ENCODE measurements at regions of chr15 and their contacts with region 1.

Region 1: DNA sequence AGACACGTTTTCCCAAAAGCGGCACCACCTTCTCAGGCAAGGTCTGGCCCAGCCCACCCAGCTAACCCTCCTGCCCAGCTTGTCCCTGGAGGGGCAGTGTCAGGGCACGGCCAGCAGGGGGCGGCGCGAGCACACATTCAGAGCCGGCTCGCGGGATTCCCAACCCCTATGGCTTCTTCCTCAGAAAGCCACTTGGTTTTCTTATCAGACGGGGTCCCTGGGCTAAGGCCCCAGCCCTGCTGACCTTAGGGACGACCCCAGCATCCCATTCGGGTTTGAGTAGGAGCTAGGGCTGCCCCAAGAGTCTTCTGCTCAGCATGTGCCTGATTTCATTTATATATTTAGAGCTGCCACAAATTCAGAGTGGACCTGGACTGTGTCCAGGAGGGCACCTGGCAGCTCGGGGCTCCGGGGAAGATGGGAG is 14.5 kb downstream of the RLBP1 start:
- DNase-seq: no peak
- H3K4me3 ChIP-seq: no peak overlapping the region
- H3K27ac ChIP-seq: no peak overlapping the region
- H3K4me1 ChIP-seq: peaks cover 4% of the 10 kb centered on the region
- H3K27me3 ChIP-seq: no peaks in the 10 kb centered on the region
- CTCF ChIP-seq: peak; percentile 80 to 98 (median 89)
- POLR2A ChIP-seq: no peak

Region 2: DNA sequence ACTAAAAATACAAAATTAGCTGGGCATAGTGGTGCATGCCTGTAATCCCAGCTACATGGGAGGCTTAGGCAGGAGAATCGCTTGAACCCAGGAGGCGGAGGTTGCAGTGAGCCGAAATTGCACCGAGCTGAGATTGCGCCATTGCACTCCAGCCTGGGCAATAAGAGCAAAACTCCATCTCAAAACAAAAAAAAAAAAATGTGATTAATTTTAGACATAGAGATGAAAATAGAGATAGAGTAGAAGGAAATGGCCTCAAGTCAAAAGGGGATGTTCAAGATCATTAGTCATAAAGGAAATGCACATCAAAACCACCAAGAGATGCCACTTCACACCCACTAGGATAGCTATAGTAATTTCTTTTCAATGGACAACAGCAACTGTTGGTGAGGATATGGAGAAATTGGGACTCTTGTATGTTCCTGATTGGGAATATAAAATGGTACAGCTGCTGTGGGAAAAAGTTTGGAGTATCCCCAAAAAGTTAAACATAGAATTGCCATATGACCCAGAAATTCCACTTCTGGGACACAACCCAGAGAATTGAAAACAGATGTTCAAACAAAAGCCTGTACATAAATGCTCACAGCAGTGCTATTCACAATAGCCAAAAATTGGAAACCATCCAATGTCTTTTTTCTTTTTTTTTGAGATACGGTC is 63.3 kb before region 1 on chr15:
- intact Hi-C with region 1: no loop called
- DNase-seq: no peak
- H3K4me3 ChIP-seq: no peak overlapping the region
- H3K27ac ChIP-seq: peak overlapping the region; percentile 53
- H3K4me1 ChIP-seq: peaks cover 70% of the 10 kb centered on the region
- H3K27me3 ChIP-seq: no peaks in the 10 kb centered on the region
- CTCF ChIP-seq: no peak
- POLR2A ChIP-seq: no peak

Region 3: GRCh38 chr15:89429023-89429422 is 222.1 kb after region 1 on chr15:
- intact Hi-C with region 1: loop called (anchors 10 kb)
- DNase-seq: no peak
- H3K4me3 ChIP-seq: no peak overlapping the region
- H3K27ac ChIP-seq: no peak overlapping the region
- H3K4me1 ChIP-seq: peaks cover 11% of the 10 kb centered on the region
- H3K27me3 ChIP-seq: no peaks in the 10 kb centered on the region
- CTCF ChIP-seq: no peak
- POLR2A ChIP-seq: no peak